ENCODE measurements at regions of chr1 and their contacts with region 1.

Region 1: DNA sequence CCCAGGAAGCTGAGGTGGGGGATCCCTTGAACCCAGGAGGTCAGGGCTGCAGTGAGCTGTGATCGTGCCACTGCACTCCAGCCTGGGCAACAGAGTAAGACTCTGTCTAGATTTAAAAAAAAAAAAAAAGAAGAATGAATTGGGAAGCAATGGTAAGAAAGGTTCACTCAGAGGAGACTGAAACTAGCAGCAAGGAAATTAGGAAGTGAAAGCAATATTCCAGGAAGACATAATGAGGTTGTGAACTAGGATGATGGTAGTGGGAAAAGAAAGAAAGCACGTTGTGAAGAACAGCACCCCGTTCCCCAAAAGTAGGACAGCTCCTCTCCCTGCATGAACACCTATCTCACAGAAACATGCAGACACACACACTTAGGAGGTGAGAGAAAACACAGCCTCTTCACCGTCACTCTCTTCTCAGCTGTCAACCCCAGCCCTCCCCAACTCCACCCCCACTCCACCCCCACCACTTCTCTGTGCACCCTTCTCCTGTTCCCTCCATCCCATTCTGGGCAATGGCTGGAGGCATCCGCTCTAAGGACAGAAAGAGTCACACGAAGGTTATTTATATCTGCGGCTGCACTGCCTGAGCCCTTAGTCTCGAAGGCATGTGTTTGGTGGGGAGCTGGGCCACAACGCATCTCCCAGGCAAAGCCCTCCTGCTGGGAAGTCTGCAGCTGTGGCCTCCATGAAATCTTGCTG is 101.8 kb upstream of the LPGAT1 start:
- H3K4me3 Mint-ChIP-seq: peak overlapping the region; percentile 9
- H3K27ac Mint-ChIP-seq: peak overlapping the region; percentile 56
- H3K4me1 Mint-ChIP-seq: peaks cover 78% of the 10 kb centered on the region
- H3K27me3 Mint-ChIP-seq: no peaks in the 10 kb centered on the region

Region 2: DNA sequence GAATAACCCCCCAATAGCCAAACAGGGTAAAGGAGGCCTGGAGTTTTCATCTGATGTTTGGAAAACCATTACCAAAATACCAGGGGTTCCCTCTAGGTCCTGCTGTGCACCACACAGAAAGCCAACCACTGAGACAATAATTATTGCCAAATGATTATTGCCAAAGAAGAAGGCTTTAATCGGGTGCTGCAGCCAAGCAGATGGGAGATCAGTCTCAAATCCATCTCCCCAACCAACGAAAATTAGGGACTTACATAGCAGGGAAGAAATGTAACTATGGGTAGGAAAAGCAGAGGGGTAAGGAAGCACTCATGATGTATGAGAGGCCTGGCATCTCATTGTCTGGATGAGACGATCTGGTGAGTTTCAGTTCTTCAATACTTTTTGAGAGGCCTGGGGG is 73.0 kb before region 1 on chr1:
- intact Hi-C with region 1: no loop called
- H3K4me3 Mint-ChIP-seq: no peak overlapping the region
- H3K27ac Mint-ChIP-seq: no peak overlapping the region
- H3K4me1 Mint-ChIP-seq: no peaks in the 10 kb centered on the region
- H3K27me3 Mint-ChIP-seq: no peaks in the 10 kb centered on the region

Region 3: GRCh38 chr1:211896958-211897357 is 35.4 kb before region 1 on chr1:
- intact Hi-C with region 1: loop called (anchors 5 kb)
- H3K4me3 Mint-ChIP-seq: no peak overlapping the region
- H3K27ac Mint-ChIP-seq: no peak overlapping the region
- H3K4me1 Mint-ChIP-seq: peaks cover 30% of the 10 kb centered on the region
- H3K27me3 Mint-ChIP-seq: no peaks in the 10 kb centered on the region

Region 4: GRCh38 chr1:212549503-212550017 is 617.2 kb after region 1 on chr1:
- intact Hi-C with region 1: no loop called
- H3K4me3 Mint-ChIP-seq: no peak overlapping the region
- H3K27ac Mint-ChIP-seq: no peak overlapping the region
- H3K4me1 Mint-ChIP-seq: peaks cover 45% of the 10 kb centered on the region
- H3K27me3 Mint-ChIP-seq: no peaks in the 10 kb centered on the region